Common myeloid progenitor, CD34-positive (primary cell): ENCODE measurements at regions of chr18 and their contacts with region 1.

Region 1: GRCh38 chr18:616380-616995 is 19.7 kb downstream of the CLUL1 start:
- DNase-seq: peak; percentile 59 to 76 (median 67)
- H3K4me3 ChIP-seq: no peak overlapping the region
- H3K27ac ChIP-seq: no peak overlapping the region
- H3K4me1 ChIP-seq: no peaks in the 10 kb centered on the region
- H3K27me3 ChIP-seq: no peaks in the 10 kb centered on the region

Region 2: DNA sequence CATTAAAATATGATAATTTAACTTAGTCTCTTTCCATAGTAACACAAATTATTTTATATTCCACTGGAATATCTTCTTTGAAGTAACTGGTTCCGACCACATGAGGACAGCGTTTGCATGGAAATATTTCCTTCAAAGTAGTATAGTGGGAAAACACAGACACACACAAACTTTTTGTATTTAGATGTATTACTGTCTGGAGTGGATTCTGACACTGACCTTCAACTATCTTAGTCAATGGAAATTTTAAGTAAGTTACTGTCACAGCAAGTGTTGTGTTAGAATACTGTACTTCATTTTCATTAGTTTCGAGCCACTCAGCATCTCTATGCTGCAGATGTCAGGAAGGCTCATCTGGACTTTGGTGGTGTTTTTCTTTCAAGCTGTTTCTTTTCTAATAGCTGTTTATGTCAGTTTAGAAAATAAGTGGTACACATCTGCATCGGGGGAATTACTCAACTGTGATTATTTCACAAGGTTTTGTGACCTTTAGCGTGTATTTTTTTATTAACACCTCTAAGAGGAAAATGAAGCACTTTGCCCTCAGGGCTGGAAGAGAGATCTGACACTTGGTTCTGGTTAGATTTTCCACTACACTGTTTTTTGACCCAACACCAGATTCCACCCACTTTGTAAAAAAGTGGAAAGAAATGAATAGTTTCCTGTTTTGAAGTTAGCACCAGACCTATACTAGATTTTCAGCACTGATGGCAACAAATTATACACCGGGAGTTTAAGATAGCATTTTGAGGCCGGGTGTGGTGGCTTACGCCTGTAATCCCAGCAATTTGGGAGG is 329.8 kb before region 1 on chr18:
- CTCF ChIA-PET with region 1: interaction called, 25 read pairs
- POLR2A ChIA-PET with region 1: interaction called, 4 read pairs
- DNase-seq: peak; percentile 31 to 55 (median 51)
- H3K4me3 ChIP-seq: no peak overlapping the region
- H3K27ac ChIP-seq: no peak overlapping the region
- H3K4me1 ChIP-seq: no peaks in the 10 kb centered on the region
- H3K27me3 ChIP-seq: no peaks in the 10 kb centered on the region

Region 3: GRCh38 chr18:293536-293935 is 323.0 kb before region 1 on chr18:
- CTCF ChIA-PET with region 1: interaction called, 25 read pairs
- POLR2A ChIA-PET with region 1: no interaction called
- DNase-seq: peak in 1 of 3 donors; percentile 11
- H3K4me3 ChIP-seq: no peak overlapping the region
- H3K27ac ChIP-seq: no peak overlapping the region
- H3K4me1 ChIP-seq: peaks cover 0 to 7% (median 0%) of the 10 kb centered on the region in 4 experiments
- H3K27me3 ChIP-seq: no peaks in the 10 kb centered on the region

Region 4: DNA sequence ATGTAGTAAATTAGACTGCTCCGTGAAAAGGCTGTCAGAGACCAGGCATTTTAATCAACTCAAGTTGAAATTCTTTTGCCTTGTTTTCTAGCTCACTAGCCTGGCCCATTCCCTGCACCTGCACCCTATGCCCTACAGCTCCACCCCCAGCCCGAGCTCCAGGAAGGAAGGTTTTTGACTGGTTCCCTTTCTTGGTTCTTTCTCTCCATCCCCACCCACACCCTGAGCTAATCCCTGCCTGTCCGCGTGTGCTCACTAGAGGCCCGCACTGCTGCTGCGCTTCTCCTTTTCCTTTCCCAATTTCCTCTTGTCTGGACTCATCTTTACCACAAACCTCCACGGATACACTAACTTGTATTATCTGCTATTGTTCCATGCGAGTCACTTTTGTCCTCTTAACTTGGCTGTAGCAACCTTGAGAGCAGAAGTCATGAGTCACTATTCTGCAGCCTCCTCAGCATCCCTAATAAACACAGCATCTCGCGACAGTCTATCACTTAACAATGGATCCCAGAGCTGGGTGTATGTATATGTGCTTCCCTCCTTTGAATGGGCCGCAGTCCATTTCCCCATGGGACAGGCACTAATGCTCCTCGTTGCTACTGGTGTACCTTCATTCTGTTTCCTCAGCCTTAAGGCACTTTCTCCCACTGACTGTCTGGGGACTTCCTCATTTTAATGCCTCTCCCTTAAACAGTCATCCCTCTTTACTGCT is 152.5 kb before region 1 on chr18:
- CTCF ChIA-PET with region 1: no interaction called
- POLR2A ChIA-PET with region 1: no interaction called
- DNase-seq: peak; percentile 34 to 87 (median 82)
- H3K4me3 ChIP-seq: peak overlapping the region in 3 of 7 experiments; percentile 37 to 50 (median 42)
- H3K27ac ChIP-seq: no peak overlapping the region
- H3K4me1 ChIP-seq: peaks cover 2 to 11% (median 10%) of the 10 kb centered on the region in 4 experiments
- H3K27me3 ChIP-seq: no peaks in the 10 kb centered on the region

Region 5: GRCh38 chr18:697800-698199 is 81.3 kb after region 1 on chr18:
- CTCF ChIA-PET with region 1: no interaction called
- POLR2A ChIA-PET with region 1: no interaction called
- DNase-seq: no peak
- H3K4me3 ChIP-seq: no peak overlapping the region
- H3K27ac ChIP-seq: no peak overlapping the region
- H3K4me1 ChIP-seq: peaks cover 0 to 12% (median 3%) of the 10 kb centered on the region in 4 experiments
- H3K27me3 ChIP-seq: no peaks in the 10 kb centered on the region

Region 6: GRCh38 chr18:765764-766549 is 149.5 kb after region 1 on chr18:
- CTCF ChIA-PET with region 1: no interaction called
- POLR2A ChIA-PET with region 1: no interaction called
- DNase-seq: no peak
- H3K4me3 ChIP-seq: no peak overlapping the region
- H3K27ac ChIP-seq: no peak overlapping the region
- H3K4me1 ChIP-seq: peaks cover 0 to 7% (median 0%) of the 10 kb centered on the region in 4 experiments
- H3K27me3 ChIP-seq: no peaks in the 10 kb centered on the region